Activated CD4-positive, alpha-beta memory T cell treated with anti-CD3 and anti-CD28 coated beads, Interleukin-2, amount 10 ng/mL, durations not matched to agents 7 days and 5 days (primary cell): ENCODE measurements at regions of chr11 and their contacts with region 1.

Region 1: DNA sequence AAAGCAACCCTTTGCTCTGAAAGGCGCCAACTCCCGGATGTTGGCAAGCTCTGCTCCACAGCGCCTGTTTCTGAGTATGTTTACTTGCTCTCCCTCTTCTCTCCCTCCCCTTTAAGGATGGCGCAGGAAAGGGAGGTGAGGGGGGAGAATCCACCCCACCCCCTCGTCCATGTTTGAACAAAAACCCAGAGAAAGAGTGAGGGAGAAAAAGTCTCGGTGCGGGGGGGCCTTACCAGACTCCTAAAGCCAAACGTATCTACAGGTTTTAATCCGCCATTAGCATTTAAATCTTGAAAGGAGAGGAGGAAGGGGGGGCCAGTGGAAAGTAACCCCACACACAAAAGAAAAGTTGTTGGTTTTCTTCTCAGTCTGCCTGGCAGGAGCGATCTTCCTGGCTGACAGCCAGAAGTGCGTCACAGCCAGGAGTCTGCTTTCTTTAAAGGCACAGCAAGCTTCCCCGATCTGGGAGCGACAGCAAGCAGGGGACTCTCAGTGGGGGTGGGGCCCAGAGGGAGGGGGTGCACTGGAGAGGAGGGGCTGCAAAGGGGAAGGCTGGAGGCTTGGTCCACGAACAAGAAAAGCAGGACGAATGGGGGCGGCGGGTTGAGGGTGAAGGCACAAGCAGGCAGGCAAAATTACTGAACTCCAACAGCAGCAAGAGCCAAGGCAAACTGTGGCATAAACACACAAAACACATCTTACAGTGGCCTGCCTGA is 39.5 kb downstream of the NUMA1 start:
- DNase-seq: peak; percentile 70
- H3K4me3 Mint-ChIP-seq: no peak overlapping the region
- H3K27ac Mint-ChIP-seq: no peak overlapping the region
- H3K4me1 Mint-ChIP-seq: peaks cover 8% of the 10 kb centered on the region
- H3K27me3 Mint-ChIP-seq: no peaks in the 10 kb centered on the region

Region 2: DNA sequence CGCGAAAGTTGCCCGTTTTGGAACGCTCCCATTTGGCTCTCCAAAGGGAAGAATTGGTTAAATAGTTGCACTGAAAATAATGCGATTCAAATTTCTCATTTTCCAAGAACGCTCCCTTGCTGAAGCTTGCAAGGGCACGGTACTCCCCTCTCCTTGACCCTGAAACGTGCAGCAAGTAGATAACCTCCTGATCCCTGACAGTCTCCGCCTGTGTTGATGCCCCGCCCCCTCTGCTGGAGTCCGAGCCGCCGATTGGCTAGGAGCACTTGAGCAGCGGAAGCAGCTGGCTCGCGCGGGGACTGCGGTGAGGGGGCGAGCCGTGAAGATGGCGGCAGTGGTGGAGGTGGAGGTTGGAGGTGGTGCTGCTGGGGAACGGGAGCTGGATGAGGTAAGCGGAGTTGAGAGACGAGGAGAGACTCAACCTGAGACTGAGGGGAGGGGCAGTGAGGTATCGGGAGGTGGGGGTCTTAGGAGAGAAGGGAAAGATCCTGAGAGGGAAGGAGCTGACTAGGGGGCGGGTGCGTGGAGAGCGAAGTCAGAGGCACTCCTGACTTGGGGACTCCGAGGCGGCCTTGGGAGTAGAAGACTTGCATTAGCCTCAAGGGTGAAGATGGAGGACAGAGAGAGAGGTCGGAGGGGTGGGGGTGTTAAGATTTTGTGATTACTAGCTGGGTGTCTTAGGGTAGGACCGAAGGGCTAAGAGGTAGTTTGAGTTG is 112.0 kb before region 1 on chr11 and contains the start of gene RNF121:
- CTCF ChIA-PET with region 1: no interaction called
- POLR2A ChIA-PET with region 1: interaction called, 13 read pairs
- DNase-seq: peak; percentile 98
- H3K4me3 Mint-ChIP-seq: peak within 1 kb of the TSS; percentile 95
- H3K27ac Mint-ChIP-seq: peak within 1 kb of the TSS; percentile 94
- H3K4me1 Mint-ChIP-seq: peaks cover 51% of the 10 kb centered on the region
- H3K27me3 Mint-ChIP-seq: no peaks in the 10 kb centered on the region
- total RNA-seq, gene RNF121: 25.7 to 28.1 TPM

Region 3: GRCh38 chr11:72012897-72013721 is 27.8 kb before region 1 on chr11:
- CTCF ChIA-PET with region 1: no interaction called
- POLR2A ChIA-PET with region 1: no interaction called
- DNase-seq: no peak
- H3K4me3 Mint-ChIP-seq: no peak overlapping the region
- H3K27ac Mint-ChIP-seq: no peak overlapping the region
- H3K4me1 Mint-ChIP-seq: no peaks in the 10 kb centered on the region
- H3K27me3 Mint-ChIP-seq: no peaks in the 10 kb centered on the region

Region 4: GRCh38 chr11:72072348-72072747 is 31.5 kb after region 1 on chr11:
- CTCF ChIA-PET with region 1: interaction called, 4 read pairs
- POLR2A ChIA-PET with region 1: interaction called, 33 read pairs
- DNase-seq: no peak
- H3K4me3 Mint-ChIP-seq: no peak overlapping the region
- H3K27ac Mint-ChIP-seq: peak overlapping the region; percentile 32
- H3K4me1 Mint-ChIP-seq: peaks cover 73% of the 10 kb centered on the region
- H3K27me3 Mint-ChIP-seq: no peaks in the 10 kb centered on the region

Region 5: GRCh38 chr11:72080256-72080974 is 39.5 kb after region 1 on chr11 and contains the starts of genes LRRC51 and NUMA1:
- CTCF ChIA-PET with region 1: interaction called, 4 read pairs
- POLR2A ChIA-PET with region 1: interaction called, 33 read pairs
- DNase-seq: peak; percentile 100
- H3K4me3 Mint-ChIP-seq: peak within 1 kb of the TSS; percentile 88
- H3K27ac Mint-ChIP-seq: peak within 1 kb of the TSS; percentile 90
- H3K4me1 Mint-ChIP-seq: peaks cover 58% of the 10 kb centered on the region
- H3K27me3 Mint-ChIP-seq: no peaks in the 10 kb centered on the region
- total RNA-seq, gene LRRC51: 5.9 to 7.1 TPM
- total RNA-seq, gene NUMA1: 200 to 201 TPM

Region 6: DNA sequence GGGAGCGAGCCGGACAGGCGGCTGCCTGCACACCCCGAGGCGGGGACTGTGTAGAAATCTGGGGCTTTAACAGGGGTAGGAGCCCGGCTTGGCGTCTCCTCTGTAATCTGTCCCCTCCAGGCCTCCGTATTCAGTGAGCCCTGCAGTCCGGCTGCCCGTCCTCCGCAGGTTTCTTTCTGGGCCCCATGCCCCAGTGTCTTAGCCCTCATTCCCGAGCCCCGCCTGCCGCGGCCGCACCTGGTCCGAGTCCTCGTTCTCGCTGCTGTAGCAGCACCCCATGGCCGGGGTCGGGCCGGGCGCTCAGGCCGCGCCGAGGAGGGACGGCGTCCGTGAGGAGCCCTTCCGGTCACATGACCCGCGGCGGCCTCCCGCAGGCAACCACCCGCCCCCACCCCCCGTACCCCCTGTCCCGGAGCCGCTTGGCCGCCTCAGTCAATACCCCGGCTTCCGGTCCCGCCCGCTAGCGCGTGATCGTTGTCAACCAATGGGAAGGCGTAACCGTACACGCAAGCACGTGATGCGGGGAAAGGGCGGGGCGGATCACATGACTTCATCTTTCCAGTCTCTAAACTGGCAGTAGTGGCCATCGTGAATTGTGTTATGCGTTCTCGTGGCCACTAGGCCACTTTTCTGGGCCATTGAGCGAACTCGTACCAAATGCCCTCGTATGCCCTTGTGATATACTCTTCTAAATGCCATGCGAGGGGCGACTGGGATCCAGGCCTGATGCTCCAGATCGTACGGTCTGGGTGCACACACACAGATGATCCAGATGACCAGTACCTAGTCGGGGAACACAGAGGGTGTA is 62.3 kb after region 1 on chr11 and contains the start of gene LAMTOR1:
- CTCF ChIA-PET with region 1: interaction called, 3 read pairs
- POLR2A ChIA-PET with region 1: interaction called, 12 read pairs
- DNase-seq: peak; percentile 99
- H3K4me3 Mint-ChIP-seq: peak within 1 kb of the TSS; percentile 87
- H3K27ac Mint-ChIP-seq: peak within 1 kb of the TSS; percentile 84
- H3K4me1 Mint-ChIP-seq: peaks cover 40% of the 10 kb centered on the region
- H3K27me3 Mint-ChIP-seq: no peaks in the 10 kb centered on the region
- total RNA-seq, gene LAMTOR1: 72.7 to 76.9 TPM

Region 7: GRCh38 chr11:72174299-72175070 is 133.6 kb after region 1 on chr11:
- CTCF ChIA-PET with region 1: no interaction called
- POLR2A ChIA-PET with region 1: no interaction called
- DNase-seq: no peak
- H3K4me3 Mint-ChIP-seq: no peak overlapping the region
- H3K27ac Mint-ChIP-seq: no peak overlapping the region
- H3K4me1 Mint-ChIP-seq: peaks cover 4% of the 10 kb centered on the region
- H3K27me3 Mint-ChIP-seq: peaks cover 3% of the 10 kb centered on the region

Region 8: DNA sequence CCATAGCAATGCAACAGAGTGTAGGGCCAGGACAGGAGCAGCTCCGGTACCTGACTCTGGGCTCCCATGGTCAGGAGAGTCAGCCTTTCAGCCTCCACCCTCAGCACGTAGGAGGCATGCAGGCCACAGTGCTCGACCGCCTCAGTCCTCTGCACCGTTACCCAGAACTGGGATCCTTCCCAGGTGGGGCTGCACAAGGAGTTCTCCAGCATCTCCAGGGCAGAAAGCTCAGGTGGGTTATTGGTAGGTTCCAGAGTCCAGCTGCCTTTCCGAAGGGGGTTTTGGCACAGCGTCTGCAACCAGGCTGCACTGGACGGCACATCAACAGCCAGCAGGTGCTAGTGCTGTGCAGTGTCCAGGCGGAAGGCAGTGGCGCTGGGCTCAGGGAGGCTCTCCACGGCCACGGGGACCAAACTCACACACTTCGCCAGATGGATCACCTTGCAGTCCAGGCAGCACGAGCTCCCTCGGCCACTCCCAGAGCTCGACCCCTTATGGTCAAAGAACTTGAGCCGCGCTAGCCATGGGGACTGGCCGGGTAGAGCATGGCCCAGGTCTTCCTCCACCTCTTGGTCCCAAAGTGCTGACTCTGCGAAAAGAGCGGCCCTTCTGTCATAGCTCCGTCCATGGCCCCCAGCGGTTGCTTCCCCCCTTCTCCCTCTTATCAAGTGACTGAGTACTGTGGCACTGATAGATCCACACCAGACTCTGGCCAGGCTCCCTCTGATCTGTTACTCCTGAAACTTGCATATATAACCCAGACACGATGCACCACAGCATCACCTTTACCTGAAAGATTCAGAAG is 210.0 kb after region 1 on chr11:
- CTCF ChIA-PET with region 1: no interaction called
- POLR2A ChIA-PET with region 1: no interaction called
- DNase-seq: no peak
- H3K4me3 Mint-ChIP-seq: no peak overlapping the region
- H3K27ac Mint-ChIP-seq: no peak overlapping the region
- H3K4me1 Mint-ChIP-seq: no peaks in the 10 kb centered on the region
- H3K27me3 Mint-ChIP-seq: peaks cover 20% of the 10 kb centered on the region